ENCODE measurements at regions of chr14 and their contacts with region 1.

Region 1: GRCh38 chr14:23379366-23380196 is 2.7 kb downstream of the CMTM5 start:
- DNase-seq: peak; percentile 83 to 96 (median 92)
- ATAC-seq: peak; percentile 88 to 100 (median 98)
- H3K4me3 ChIP-seq: no peak overlapping the region
- H3K27ac ChIP-seq: no peak overlapping the region
- H3K4me1 ChIP-seq: peaks cover 0 to 3% (median 0%) of the 10 kb centered on the region in 3 donors
- H3K27me3 ChIP-seq: no peaks in the 10 kb centered on the region
- CTCF ChIP-seq: peak; percentile 86 to 94 (median 92)

Region 2: GRCh38 chr14:23114669-23115491 is 264.7 kb before region 1 on chr14:
- intact Hi-C with region 1: no loop called
- DNase-seq: no peak
- ATAC-seq: peak in 2 of 4 donors; percentile 32 to 58
- H3K4me3 ChIP-seq: no peak overlapping the region
- H3K27ac ChIP-seq: no peak overlapping the region
- H3K4me1 ChIP-seq: no peaks in the 10 kb centered on the region
- H3K27me3 ChIP-seq: no peaks in the 10 kb centered on the region
- CTCF ChIP-seq: no peak

Region 3: GRCh38 chr14:23269193-23269592 is 110.4 kb before region 1 on chr14:
- intact Hi-C with region 1: loop called in 1 of 3 experiments (anchors 5 kb)
- DNase-seq: no peak
- ATAC-seq: no peak
- H3K4me3 ChIP-seq: no peak overlapping the region
- H3K27ac ChIP-seq: no peak overlapping the region
- H3K4me1 ChIP-seq: no peaks in the 10 kb centered on the region
- H3K27me3 ChIP-seq: no peaks in the 10 kb centered on the region
- CTCF ChIP-seq: no peak

Region 4: DNA sequence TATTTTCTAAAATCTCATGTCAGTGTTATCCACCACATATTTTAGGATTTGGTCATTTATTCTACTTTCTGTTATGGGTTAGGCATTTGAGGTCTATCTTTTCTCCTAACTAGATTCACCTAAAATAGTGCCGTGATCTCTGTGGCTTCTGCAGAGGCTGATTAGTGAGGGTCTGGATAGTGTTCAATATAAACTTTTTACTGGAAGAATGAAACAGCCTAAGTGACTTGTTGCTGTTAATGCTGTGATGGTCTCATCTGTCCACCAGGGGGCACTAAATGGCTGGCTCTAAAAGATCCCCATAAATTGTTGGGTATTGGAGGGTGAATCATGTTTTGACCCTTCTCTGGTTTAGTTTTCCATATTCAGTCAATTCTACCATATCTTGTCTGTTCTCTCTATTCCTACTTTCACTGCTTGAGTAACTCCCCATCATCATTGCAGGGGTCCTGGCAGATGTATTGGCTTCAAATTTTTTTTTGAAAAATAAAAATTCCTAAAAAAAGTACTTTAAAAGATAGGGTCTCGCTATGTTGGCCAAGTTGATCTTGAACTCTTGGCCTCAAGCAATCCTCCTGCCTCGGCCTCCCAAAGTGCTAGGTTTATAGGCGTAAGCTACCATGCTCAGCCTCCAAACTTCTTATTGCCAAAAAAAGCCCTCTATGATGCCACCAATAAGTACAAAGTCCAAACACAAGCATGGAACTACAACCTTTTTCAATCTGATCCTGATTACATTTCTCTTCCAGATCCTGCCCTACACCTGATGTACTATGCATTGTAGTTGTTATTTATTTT is 51.4 kb before region 1 on chr14:
- intact Hi-C with region 1: loop called in 1 of 3 experiments (anchors 5 kb)
- DNase-seq: peak in 4 of 6 donors; percentile 52 to 77 (median 61)
- ATAC-seq: peak; percentile 75 to 96 (median 90)
- H3K4me3 ChIP-seq: no peak overlapping the region
- H3K27ac ChIP-seq: no peak overlapping the region
- H3K4me1 ChIP-seq: peaks cover 0 to 8% (median 4%) of the 10 kb centered on the region in 3 donors
- H3K27me3 ChIP-seq: no peaks in the 10 kb centered on the region
- CTCF ChIP-seq: peak; percentile 70 to 84 (median 79)

Region 5: GRCh38 chr14:23430788-23431085 is 51.2 kb after region 1 on chr14:
- intact Hi-C with region 1: no loop called
- DNase-seq: no peak
- ATAC-seq: peak in 1 of 4 donors; percentile 61
- H3K4me3 ChIP-seq: no peak overlapping the region
- H3K27ac ChIP-seq: no peak overlapping the region
- H3K4me1 ChIP-seq: no peaks in the 10 kb centered on the region
- H3K27me3 ChIP-seq: no peaks in the 10 kb centered on the region
- CTCF ChIP-seq: no peak

Region 6: GRCh38 chr14:23555882-23556699 is 176.5 kb after region 1 on chr14 and contains the start of gene THTPA:
- intact Hi-C with region 1: no loop called
- DNase-seq: peak; percentile 91 to 97 (median 92)
- ATAC-seq: peak; percentile 82 to 90 (median 86)
- H3K4me3 ChIP-seq: peak within 1 kb of the TSS; percentile 70 to 96 (median 90)
- H3K27ac ChIP-seq: peak within 1 kb of the TSS; percentile 90 to 94 (median 93)
- H3K4me1 ChIP-seq: peaks cover 0 to 11% (median 6%) of the 10 kb centered on the region in 3 donors
- H3K27me3 ChIP-seq: no peaks in the 10 kb centered on the region
- CTCF ChIP-seq: no peak
- total RNA-seq, gene THTPA: 5.6 to 11.6 (median 8.4) TPM

Measured in pancreas (tissue), 10 donors.